GM13976 (cell line): ENCODE measurements at regions of chr3 and their contacts with region 1.

Region 1: GRCh38 chr3:12896063-12896985 is 55.0 kb upstream of the RPL32 start:
- DNase-seq: no peak
- CTCF ChIP-seq: no peak

Region 2: DNA sequence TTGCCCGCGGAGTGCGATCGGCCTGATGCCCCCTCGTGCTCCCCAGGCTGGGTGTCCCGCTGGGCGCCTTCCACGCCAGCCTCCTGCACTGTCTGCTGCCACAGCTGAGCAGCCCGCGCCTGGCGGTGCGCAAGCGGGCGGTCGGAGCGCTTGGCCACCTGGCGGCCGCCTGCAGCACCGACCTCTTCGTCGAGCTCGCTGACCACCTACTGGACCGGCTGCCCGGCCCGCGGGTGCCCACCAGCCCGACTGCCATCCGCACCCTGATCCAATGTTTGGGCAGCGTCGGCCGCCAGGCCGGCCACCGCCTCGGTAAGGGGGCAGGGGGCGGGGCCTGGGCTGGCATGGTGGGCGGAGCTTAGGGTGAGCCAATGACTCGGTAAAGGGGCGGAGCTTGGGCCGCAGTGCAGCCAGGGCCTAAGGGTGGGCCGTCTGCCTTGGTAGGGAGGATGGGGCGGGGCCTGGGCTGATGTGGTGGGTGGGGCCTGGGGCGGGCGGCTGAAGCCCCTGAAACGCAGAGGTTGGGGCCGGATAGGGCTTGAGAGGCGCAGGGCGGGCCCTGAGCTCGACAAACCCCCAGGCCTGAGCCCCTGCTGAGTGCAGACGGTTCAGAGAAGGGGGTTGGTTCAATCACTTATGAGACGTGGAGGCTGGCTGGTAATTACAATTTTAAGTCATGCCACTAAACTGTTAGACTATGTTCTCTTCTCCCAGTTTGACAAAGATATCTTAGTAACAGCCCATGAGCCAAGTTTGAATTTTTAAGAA is 86.1 kb before region 1 on chr3:
- in situ Hi-C with region 1: no loop called
- DNase-seq: peak; percentile 100
- CTCF ChIP-seq: peak; percentile 76

Region 3: DNA sequence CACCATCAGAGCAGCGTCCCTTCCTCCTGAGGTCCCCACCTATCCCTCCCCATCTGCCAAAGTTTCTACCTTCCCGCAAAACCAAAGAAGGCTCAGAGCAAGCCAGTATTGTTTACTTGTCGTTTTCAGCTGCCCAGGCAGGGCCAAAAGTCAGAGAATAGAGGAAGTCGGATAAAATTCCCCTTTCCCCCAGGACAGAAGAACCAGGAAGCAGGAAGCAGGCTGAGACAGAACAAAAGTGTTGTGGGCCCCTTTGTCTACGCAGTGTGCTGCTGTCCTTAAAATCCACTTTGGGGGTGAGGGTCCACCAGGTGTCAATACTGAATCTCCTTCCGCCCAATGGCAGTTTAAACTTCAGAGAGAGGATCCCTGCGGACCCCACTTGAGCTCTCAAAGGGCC is 36.5 kb before region 1 on chr3:
- in situ Hi-C with region 1: loop called (anchors 5 kb)
- DNase-seq: no peak
- CTCF ChIP-seq: no peak